Activated CD4-positive, alpha-beta memory T cell treated with anti-CD3 and anti-CD28 coated beads, Interleukin-2, amount 10 ng/mL, durations not matched to agents 7 days and 5 days (primary cell): ENCODE measurements at regions of chr3 and their contacts with region 1.

Region 1: DNA sequence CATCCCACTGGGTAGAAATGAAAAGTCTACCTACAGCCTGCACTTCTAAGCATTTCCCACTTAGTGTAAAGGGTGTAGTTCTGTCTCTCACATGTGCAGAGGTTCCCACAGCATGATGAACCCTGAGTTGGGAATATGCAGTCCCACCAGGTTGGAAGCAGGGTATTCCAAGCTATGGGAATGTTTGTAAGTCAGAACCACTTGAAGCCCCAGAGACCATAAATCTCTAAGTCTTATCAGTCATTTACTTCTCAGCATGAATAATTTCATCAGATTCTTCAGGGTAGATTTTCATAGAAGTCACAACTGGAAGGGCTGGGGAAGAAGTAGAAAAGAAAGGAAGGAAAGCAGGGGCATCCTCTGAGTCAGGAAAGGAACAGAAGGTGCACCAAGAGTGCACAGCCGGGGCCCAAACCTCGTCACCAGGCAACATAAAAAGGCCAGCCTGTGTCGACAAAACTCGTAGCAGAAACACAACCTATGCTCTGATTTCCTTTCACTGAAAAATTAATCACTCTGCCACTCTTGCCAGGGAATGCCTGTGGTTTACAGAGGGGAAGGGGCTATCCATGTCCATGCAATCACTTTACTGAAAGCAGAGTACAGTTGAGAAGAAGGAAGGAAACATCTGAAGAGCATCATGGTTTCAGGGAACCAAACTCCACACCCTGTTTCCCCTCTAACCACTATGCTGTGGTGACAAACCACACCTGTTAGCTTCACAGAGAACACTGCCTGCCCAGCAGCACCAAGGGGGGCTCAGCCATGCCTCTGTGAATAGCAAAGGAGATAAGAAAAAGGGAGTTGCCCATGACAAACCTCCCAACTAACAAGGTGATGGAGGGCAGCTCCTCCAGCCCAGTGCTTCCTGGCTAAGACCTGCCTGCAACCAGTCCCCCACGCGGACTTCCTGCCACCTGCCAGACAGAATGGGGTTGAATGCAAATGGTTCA is 40.5 kb downstream of the SH3BP5 start:
- DNase-seq: peak; percentile 80
- H3K4me3 Mint-ChIP-seq: peak overlapping the region; percentile 58
- H3K27ac Mint-ChIP-seq: peak overlapping the region; percentile 96
- H3K4me1 Mint-ChIP-seq: peaks cover 80% of the 10 kb centered on the region
- H3K27me3 Mint-ChIP-seq: no peaks in the 10 kb centered on the region

Region 2: DNA sequence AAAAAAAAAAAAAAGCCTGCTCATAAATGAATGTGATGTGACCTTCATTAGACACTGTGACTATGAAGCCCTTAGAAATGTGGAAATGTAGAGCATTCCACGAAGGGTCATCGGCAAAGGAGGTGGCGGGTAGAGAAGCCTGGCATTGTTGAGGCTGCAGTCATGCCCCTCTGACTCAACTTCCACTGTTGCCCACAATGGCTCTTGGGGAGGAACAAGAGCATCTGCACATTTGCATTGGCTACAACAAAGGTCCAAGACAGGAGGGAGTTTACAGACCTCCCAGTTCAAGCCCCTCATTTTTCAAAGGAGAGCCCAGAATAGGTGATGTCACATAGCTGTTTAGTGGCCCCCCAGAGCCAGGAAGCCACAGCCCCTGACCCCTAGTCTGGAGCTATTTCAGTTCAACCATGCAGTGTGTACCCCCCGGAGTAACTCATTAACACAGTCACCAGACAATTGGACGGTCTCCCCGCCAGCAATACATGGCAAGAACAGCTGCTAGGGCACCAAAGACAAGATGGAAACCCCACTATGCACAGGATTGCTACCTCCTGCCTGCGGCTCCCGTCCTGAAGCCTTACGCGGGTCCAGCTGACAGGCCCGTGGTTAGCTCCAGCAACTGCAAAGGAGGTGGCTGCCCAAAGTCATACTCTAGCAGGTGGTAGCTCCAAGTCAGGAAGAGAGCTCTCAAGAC is 15.7 kb before region 1 on chr3:
- CTCF ChIA-PET with region 1: interaction called, 7 read pairs
- POLR2A ChIA-PET with region 1: interaction called, 44 read pairs
- DNase-seq: no peak
- H3K4me3 Mint-ChIP-seq: no peak overlapping the region
- H3K27ac Mint-ChIP-seq: peak overlapping the region; percentile 71
- H3K4me1 Mint-ChIP-seq: peaks cover 69% of the 10 kb centered on the region
- H3K27me3 Mint-ChIP-seq: no peaks in the 10 kb centered on the region

Region 3: DNA sequence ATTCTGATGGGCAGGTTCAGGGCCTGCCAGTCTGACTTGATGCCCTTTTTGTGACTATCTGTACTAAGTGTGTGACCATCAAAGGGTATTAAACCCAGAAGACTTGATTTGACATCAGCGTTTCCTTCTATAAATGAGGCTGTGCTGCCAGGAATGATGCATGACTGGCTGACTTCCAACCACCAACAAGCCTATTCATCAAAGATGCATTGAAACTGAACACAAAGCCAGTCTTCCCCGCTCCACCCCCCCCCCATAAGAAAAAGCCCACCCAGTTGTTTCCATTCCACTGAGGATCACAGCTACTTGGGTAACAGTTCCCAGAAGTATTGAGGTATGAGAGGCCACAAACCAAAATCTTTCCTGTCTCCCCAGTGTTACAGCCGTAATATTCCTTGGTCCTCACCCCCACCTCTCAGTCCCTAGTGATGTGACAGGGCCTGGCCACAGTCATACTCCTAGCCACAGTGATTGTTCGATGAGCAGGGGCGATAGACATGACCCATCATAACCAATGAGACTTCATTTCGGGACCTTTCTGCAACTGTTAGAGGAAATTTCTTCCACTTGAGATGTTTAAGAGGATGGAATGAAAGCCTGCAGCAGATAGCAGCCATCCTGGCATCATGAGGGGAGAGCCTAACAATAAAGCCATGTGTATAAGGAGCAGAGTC is 17.9 kb after region 1 on chr3:
- CTCF ChIA-PET with region 1: interaction called, 20 read pairs
- POLR2A ChIA-PET with region 1: interaction called, 38 read pairs
- DNase-seq: no peak
- H3K4me3 Mint-ChIP-seq: peak overlapping the region; percentile 19
- H3K27ac Mint-ChIP-seq: peak overlapping the region; percentile 89
- H3K4me1 Mint-ChIP-seq: peaks cover 71% of the 10 kb centered on the region
- H3K27me3 Mint-ChIP-seq: no peaks in the 10 kb centered on the region